ENCODE measurements at regions of chr7 and their contacts with region 1.

Region 1: DNA sequence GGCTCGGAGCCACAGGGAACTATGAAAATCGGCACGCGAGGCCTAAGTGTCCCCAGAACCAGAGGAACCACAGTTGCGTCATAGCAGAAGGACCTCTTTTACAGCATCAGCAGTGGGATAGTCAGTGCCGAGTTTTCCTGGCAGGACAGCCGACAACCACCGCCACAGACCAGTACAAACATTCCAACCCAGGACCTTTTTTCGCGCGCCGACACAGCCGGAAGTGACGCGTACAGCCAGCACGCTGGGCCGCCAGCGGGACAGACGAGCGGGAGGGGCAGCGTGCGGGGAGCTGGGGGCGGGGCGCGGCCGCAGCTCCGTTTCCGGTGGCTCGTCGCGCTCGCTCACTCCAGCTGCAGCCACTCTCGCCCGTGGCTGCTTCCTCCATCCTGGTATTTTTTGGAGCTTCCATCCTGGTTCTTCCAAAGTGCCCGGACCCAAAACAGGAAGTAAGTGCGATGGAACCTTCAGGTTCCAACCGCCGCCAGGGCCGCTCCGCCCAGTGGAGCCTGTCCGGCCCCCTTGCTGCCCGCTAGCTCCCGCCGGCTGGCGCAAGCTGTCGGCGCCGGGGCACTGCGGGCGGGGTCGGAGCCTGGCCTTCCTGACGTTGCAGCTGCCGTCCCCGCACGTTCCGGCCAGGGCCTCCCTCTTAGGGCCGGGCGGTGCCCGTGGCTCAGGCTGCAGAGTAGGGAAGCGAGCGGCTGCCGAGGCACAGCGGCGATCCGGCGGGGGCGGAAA is at the start of gene DMTF1:
- DNase-seq: peak; percentile 97
- ATAC-seq: peak; percentile 99
- total RNA-seq, gene DMTF1: 26.8 TPM

Region 2: GRCh38 chr7:87219545-87220025 is 67.3 kb after region 1 on chr7 and contains the start of gene TMEM243:
- intact Hi-C with region 1: loop called (anchors 5 kb)
- DNase-seq: peak; percentile 91
- ATAC-seq: peak; percentile 93
- total RNA-seq, gene TMEM243: 4.8 TPM

Measured in Right ventricle myocardium superior (tissue), 1 donor.